ENCODE measurements at regions of chr1 and their contacts with region 1.

Region 1: GRCh38 chr1:225977937-225978748 is 21.0 kb downstream of the SDE2 start:
- DNase-seq: no peak
- ATAC-seq: no peak
- H3K4me3 Mint-ChIP-seq: no peak overlapping the region
- H3K27ac Mint-ChIP-seq: no peak overlapping the region
- H3K4me1 Mint-ChIP-seq: peaks cover 6% of the 10 kb centered on the region
- H3K27me3 Mint-ChIP-seq: no peaks in the 10 kb centered on the region

Region 2: GRCh38 chr1:225318706-225319575 is 659.2 kb before region 1 on chr1:
- CTCF ChIA-PET with region 1: no interaction called
- POLR2A ChIA-PET with region 1: no interaction called
- intact Hi-C with region 1: loop called (anchors 2 kb)
- DNase-seq: peak; percentile 36
- ATAC-seq: peak; percentile 55
- H3K4me3 Mint-ChIP-seq: no peak overlapping the region
- H3K27ac Mint-ChIP-seq: no peak overlapping the region
- H3K4me1 Mint-ChIP-seq: no peaks in the 10 kb centered on the region
- H3K27me3 Mint-ChIP-seq: no peaks in the 10 kb centered on the region

Region 3: DNA sequence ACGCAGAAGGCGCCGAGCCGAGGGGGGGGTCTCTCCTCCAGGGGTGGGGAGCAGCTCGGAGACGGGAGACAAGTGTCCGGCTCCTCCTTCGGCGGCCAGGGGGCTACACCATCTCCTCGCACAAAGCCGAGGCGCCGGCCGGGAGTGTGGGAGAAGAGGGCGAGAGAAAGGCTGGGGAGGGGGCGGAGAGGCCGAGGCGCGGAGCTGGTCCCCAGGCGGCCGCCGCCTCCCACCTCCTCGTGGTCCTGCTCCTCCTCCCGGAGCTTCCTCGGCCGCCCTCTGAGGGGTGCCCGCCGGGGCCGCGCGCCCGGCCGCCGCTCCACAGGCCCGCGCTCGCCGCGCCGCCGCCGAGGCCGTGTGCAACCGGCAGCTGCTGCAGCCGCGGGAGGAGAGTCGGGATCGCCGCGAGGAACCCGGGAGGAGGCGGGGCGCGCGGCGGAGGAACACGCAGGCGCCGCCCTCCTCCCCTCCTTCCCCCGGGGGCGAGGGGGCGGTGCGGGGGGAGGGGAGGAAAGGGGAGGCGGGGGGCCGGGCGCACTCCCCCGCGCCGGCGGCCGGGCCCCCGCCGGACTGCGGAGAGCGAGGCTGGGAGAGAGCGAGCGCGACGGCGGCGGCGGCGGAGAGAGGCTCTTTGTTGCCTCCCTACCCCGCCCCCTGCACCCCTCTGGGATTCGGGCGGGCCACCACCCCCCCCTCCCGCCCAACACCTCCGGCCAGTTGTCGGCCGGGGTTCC is 325.2 kb before region 1 on chr1 and contains the start of gene ENAH:
- CTCF ChIA-PET with region 1: no interaction called
- POLR2A ChIA-PET with region 1: no interaction called
- intact Hi-C with region 1: loop called in 1 of 2 experiments (anchors 10 kb)
- DNase-seq: peak; percentile 65
- ATAC-seq: peak; percentile 69
- H3K4me3 Mint-ChIP-seq: peak within 1 kb of the TSS; percentile 75
- H3K27ac Mint-ChIP-seq: peak within 1 kb of the TSS; percentile 15
- H3K4me1 Mint-ChIP-seq: peaks cover 12% of the 10 kb centered on the region
- H3K27me3 Mint-ChIP-seq: peaks cover 31% of the 10 kb centered on the region
- total RNA-seq, gene ENAH: 0.62 to 0.81 TPM

Region 4: GRCh38 chr1:225911191-225912130 is 66.7 kb before region 1 on chr1:
- CTCF ChIA-PET with region 1: interaction called, 4 read pairs
- POLR2A ChIA-PET with region 1: no interaction called
- intact Hi-C with region 1: loop called (anchors 1 to 5 kb)
- DNase-seq: peak; percentile 85
- ATAC-seq: peak; percentile 92
- H3K4me3 Mint-ChIP-seq: no peak overlapping the region
- H3K27ac Mint-ChIP-seq: no peak overlapping the region
- H3K4me1 Mint-ChIP-seq: peaks cover 18% of the 10 kb centered on the region
- H3K27me3 Mint-ChIP-seq: no peaks in the 10 kb centered on the region

Region 5: DNA sequence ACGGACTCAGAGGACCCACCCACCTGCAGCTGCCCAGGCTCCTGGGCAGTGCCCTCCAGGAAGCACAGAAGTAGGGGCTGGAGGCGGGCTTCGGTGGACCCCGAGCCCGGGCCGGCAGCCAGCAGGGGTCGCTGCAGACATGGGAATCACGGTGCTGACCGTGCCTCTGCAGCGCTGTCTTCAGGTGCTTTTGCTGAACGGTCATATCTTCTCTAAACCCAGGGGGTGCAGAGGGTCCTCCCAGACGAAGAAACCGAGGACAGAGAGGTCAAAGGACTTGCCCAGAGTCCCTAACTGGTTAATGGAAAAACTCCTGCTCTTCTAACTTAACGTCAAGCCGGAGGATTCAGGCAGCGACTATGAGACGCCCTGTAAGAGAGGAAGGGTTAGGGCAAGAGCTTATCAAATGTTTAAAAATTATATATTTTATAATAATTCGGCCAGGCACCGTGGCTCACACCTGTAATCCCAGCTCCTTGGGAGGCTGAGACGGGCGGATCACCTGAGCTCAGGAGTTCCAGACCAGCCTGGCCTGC is 15.6 kb before region 1 on chr1:
- CTCF ChIA-PET with region 1: interaction called, 17 read pairs
- POLR2A ChIA-PET with region 1: no interaction called
- intact Hi-C with region 1: no loop called
- DNase-seq: peak; percentile 84
- ATAC-seq: peak; percentile 86
- H3K4me3 Mint-ChIP-seq: no peak overlapping the region
- H3K27ac Mint-ChIP-seq: no peak overlapping the region
- H3K4me1 Mint-ChIP-seq: peaks cover 2% of the 10 kb centered on the region
- H3K27me3 Mint-ChIP-seq: peaks cover 2% of the 10 kb centered on the region

Measured in activated CD4-positive, alpha-beta T cell treated with anti-CD3 and anti-CD28 coated beads for 36 hours (primary cell).